Activated CD4-positive, alpha-beta T cell treated with anti-CD3 and anti-CD28 coated beads for 36 hours (primary cell): ENCODE measurements at regions of chr1 and their contacts with region 1.

Region 1: GRCh38 chr1:63148825-63149645 is 173.3 kb upstream of the FOXD3 start:
- DNase-seq: peak; percentile 39
- ATAC-seq: no peak
- H3K4me3 Mint-ChIP-seq: no peak overlapping the region
- H3K27ac Mint-ChIP-seq: no peak overlapping the region
- H3K4me1 Mint-ChIP-seq: no peaks in the 10 kb centered on the region
- H3K27me3 Mint-ChIP-seq: peaks cover 9% of the 10 kb centered on the region

Region 2: DNA sequence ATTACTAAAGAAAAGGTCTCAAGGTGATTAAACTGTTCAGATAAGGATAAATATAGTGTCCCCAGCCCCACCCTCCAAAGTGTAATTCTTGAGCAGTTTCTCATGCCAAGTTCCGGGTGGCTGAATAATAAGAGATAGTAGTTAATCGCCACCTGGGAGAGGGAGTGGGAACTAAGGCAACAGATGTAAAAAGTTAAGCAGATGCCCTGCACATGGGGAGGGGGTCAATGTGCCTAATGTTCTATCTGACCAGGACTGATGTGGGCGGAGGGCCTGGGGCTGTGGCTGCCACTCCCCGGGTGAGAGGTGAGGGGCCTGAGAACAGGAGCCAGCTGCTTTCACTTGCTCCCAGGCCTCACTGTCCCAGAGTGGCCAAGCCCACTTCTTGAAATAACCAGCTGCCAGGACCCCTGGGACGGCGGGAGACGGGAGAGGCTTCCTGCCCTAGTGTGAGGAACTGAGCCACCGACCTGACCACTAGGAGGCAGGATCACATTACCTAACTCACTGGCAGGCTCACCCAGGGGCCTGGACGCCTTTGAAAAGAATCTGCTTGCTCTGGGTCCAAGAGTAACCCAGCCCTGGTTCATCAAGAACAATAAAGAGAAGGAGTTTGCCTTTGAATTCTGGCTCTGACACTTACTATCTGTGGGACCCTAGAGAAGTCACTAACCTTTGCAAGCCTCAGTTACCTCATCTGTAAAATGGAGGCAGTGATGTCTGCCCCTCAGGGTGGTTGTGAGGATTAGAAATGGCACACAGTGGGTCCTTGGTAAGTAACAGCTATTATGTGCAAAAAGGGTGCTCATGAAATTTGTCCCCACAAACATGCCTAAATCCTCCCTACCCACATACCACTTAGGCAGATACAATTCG is 185.9 kb before region 1 on chr1:
- CTCF ChIA-PET with region 1: no interaction called
- POLR2A ChIA-PET with region 1: no interaction called
- intact Hi-C with region 1: loop called (anchors 1 to 5 kb)
- DNase-seq: peak; percentile 57
- ATAC-seq: no peak
- H3K4me3 Mint-ChIP-seq: no peak overlapping the region
- H3K27ac Mint-ChIP-seq: no peak overlapping the region
- H3K4me1 Mint-ChIP-seq: no peaks in the 10 kb centered on the region
- H3K27me3 Mint-ChIP-seq: peaks cover 8% of the 10 kb centered on the region